Caco-2 (cell line): ENCODE measurements at regions of chr20 and their contacts with region 1.

Region 1: GRCh38 chr20:32697608-32698007 is 23.9 kb upstream of the C20orf203 start:
- DNase-seq: no peak
- H3K4me3 ChIP-seq: no peak overlapping the region
- H3K4me3 Mint-ChIP-seq: no peak overlapping the region
- H3K27ac Mint-ChIP-seq: peak overlapping the region; percentile 43
- H3K4me1 ChIP-seq: peaks cover 19% of the 10 kb centered on the region
- H3K4me1 Mint-ChIP-seq: peaks cover 31% of the 10 kb centered on the region
- H3K27me3 ChIP-seq: no peaks in the 10 kb centered on the region
- H3K27me3 Mint-ChIP-seq: no peaks in the 10 kb centered on the region
- CTCF ChIP-seq: no peak

Region 2: DNA sequence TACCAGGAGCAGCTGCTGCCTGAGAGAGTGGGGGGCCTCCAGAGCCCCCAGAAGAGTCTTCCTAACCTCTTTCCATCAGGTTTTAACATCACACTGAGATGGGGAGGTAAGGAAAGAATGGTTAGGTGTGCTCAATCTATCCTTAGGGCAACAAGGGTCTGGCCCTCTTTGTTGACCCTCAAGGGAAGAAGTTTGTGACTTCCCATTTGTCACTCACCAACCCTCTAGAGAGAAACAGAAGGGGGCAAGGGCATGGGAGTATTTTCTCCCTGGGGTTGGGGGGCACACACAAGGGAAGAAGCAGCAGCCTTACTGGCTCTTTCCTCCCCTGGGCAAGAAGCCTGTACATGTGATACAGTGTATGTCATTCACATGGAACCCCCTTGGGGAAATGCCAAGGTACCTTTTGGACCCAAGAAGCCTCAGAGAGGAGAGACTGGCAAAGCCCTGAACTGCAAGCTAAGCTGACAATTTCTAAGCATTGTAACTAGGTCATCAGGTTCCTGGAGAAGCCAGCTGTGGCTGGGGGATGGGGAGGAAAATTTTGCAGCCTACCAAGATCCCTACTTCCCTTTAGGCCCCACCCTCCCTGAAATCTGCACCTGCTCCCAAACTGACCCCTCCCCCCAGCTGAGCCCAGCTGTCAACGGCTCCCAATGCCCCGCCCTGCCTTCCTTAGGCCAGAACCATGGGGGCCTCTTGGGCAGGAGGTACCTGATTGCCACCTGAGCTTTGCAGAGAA is 989.4 kb before region 1 on chr20:
- CTCF ChIA-PET with region 1: no interaction called
- POLR2A ChIA-PET with region 1: no interaction called
- intact Hi-C with region 1: no loop called
- DNase-seq: peak; percentile 95 to 97
- H3K4me3 ChIP-seq: no peak overlapping the region
- H3K4me3 Mint-ChIP-seq: peak overlapping the region; percentile 44
- H3K27ac Mint-ChIP-seq: peak overlapping the region; percentile 98
- H3K4me1 ChIP-seq: peaks cover 93% of the 10 kb centered on the region
- H3K4me1 Mint-ChIP-seq: peaks cover 74% of the 10 kb centered on the region
- H3K27me3 ChIP-seq: no peaks in the 10 kb centered on the region
- H3K27me3 Mint-ChIP-seq: no peaks in the 10 kb centered on the region
- CTCF ChIP-seq: no peak

Region 3: DNA sequence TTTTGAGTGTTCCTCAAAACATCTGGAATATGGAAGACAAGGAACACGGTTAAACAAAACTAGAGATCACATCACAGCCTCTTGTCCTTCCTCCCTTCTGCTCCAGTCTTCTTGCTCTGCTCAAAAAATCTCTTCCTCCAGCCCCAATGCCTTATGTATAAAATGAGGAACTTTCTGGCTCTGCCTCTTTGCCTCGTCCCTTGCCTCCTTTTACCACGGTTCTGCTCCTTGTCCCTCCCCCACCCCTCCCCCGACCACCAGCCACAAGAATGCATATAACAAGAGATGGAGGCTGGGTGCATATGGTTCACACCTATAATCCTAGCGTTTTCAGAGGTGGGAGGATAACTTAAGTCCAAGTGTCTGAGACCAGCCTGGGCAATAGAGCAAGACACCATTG is 533.7 kb before region 1 on chr20:
- CTCF ChIA-PET with region 1: interaction called, 12 read pairs
- POLR2A ChIA-PET with region 1: no interaction called
- intact Hi-C with region 1: no loop called
- DNase-seq: no peak
- H3K4me3 ChIP-seq: no peak overlapping the region
- H3K4me3 Mint-ChIP-seq: no peak overlapping the region
- H3K27ac Mint-ChIP-seq: no peak overlapping the region
- H3K4me1 ChIP-seq: 0 out of 2 replicates have a peak, but pooled peaks cover 5% of the 10 kb centered on the region
- H3K4me1 Mint-ChIP-seq: no peaks in the 10 kb centered on the region
- H3K27me3 ChIP-seq: no peaks in the 10 kb centered on the region
- H3K27me3 Mint-ChIP-seq: no peaks in the 10 kb centered on the region
- CTCF ChIP-seq: no peak

Region 4: DNA sequence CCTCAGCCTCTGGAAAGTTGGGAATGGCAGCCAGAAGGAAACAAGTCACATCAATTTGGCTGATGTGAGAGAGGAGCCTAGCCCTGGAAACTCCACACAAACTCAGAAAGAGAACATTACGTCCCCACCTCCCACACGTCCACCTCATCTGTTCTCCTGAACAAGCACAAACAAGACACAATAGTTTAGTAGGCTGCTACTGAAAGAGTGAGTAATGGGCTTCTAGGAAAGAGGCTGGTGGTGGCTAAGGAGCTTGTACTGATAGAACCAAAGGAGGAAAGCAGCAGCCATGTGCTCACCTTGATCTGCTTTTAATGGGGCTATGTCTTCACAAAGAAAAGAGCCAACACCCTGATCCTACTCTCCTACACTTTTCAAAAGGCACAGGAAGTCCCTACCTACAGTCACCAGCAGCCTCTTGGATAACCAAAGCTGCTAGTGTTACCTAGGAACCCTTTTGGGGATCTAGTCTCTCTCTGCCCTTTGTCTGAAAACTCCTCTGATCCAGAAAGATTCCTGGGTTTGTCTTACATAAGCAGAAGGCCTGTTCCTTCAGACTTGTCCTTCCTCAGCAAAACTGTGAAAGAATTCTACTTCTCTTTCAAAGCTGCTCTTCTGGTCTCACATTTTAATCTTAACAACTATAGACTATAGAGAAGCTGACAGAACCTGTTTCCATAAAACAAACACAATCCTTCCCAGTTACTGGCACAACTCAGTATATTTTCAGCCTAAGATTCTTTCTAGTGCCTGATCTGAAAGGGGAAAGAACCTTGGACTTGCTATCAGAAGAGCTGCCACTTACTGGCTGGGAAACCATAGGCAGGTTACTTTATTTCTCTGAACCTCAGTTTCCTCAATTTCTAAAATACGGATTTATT is 493.2 kb before region 1 on chr20:
- CTCF ChIA-PET with region 1: no interaction called
- POLR2A ChIA-PET with region 1: no interaction called
- intact Hi-C with region 1: no loop called
- DNase-seq: no peak
- H3K4me3 ChIP-seq: no peak overlapping the region
- H3K4me3 Mint-ChIP-seq: peak overlapping the region; percentile 92
- H3K27ac Mint-ChIP-seq: peak overlapping the region; percentile 89
- H3K4me1 ChIP-seq: peaks cover 46% of the 10 kb centered on the region
- H3K4me1 Mint-ChIP-seq: peaks cover 47% of the 10 kb centered on the region
- H3K27me3 ChIP-seq: no peaks in the 10 kb centered on the region
- H3K27me3 Mint-ChIP-seq: no peaks in the 10 kb centered on the region
- CTCF ChIP-seq: no peak

Region 5: GRCh38 chr20:32396646-32397160 is 300.9 kb before region 1 on chr20:
- CTCF ChIA-PET with region 1: no interaction called
- POLR2A ChIA-PET with region 1: no interaction called
- intact Hi-C with region 1: no loop called
- DNase-seq: no peak
- H3K4me3 ChIP-seq: no peak overlapping the region
- H3K4me3 Mint-ChIP-seq: no peak overlapping the region
- H3K27ac Mint-ChIP-seq: no peak overlapping the region
- H3K4me1 ChIP-seq: no peaks in the 10 kb centered on the region
- H3K4me1 Mint-ChIP-seq: no peaks in the 10 kb centered on the region
- H3K27me3 ChIP-seq: no peaks in the 10 kb centered on the region
- H3K27me3 Mint-ChIP-seq: no peaks in the 10 kb centered on the region
- CTCF ChIP-seq: no peak

Region 6: DNA sequence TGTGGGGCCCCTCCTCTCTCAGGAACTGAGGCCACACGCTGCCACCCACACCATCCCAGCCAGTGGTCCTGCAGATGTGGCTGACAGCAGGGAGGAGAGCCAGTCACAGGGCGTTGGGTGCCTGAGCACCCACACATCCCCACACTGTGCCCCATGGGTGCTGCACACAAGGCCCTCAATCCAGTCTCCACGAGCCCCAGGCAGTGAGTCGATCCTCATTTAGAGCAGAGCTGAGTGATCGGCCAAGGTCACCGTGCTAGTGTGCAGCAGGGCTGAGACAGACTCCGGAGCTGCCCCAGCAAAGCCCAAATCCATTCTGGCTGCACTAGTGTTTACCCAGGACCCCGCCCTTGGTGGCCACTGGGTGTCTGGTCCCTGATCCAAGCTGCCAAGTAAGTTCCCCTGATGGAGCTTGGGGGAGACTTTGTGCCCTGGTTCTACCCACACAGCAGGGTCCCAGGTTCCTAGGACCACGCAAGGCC is 32.9 kb before region 1 on chr20:
- CTCF ChIA-PET with region 1: no interaction called
- POLR2A ChIA-PET with region 1: interaction called, 11 read pairs
- intact Hi-C with region 1: no loop called
- DNase-seq: no peak
- H3K4me3 ChIP-seq: no peak overlapping the region
- H3K4me3 Mint-ChIP-seq: no peak overlapping the region
- H3K27ac Mint-ChIP-seq: peak overlapping the region; percentile 18
- H3K4me1 ChIP-seq: peaks cover 9% of the 10 kb centered on the region
- H3K4me1 Mint-ChIP-seq: peaks cover 8% of the 10 kb centered on the region
- H3K27me3 ChIP-seq: no peaks in the 10 kb centered on the region
- H3K27me3 Mint-ChIP-seq: no peaks in the 10 kb centered on the region
- CTCF ChIP-seq: peak in 1 of 2 experiments; percentile 17